Heart left ventricle (tissue), 16 donors: ENCODE measurements at regions of chr2 and their contacts with region 1.

Region 1: DNA sequence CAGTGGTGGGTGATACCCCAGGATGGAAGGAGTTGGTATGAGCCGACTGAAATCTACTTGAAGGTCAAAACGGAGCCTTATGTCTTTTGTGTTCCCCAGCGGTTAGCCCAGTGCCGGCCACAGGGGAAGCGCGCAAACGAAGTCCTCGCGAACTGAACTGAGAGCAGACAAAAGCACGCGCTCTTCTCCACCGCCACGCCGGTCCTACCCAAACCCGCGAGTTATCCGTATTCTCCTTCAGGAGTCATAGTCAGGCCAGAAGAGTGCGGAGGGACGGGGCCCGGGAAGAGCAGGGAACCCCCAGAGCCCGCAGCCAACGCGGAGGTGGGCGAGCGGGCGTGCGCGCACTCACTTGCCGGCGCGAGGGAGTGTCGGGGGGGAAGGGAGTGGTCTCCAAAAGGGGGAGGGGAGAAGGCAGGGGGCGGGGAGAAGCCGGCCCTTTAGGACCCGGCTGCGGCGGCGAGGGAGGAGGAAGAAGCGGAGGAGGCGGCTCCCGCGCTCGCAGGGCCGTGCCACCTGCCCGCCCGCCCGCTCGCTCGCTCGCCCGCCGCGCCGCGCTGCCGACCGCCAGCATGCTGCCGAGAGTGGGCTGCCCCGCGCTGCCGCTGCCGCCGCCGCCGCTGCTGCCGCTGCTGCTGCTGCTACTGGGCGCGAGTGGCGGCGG is at the start of gene IGFBP2:
- DNase-seq: peak; percentile 53 to 72 (median 62)
- ATAC-seq: peak in 3 of 4 donors; percentile 56 to 76 (median 65)
- H3K4me3 ChIP-seq: peak within 1 kb of the TSS; percentile 28 to 88 (median 66)
- H3K27ac ChIP-seq: peak within 1 kb of the TSS in 8 of 12 donors; percentile 22 to 66 (median 46)
- H3K4me1 ChIP-seq: peaks cover 0 to 52% (median 27%) of the 10 kb centered on the region in 12 donors
- H3K27me3 ChIP-seq: peaks cover 0 to 28% (median 0%) of the 10 kb centered on the region in 9 donors
- CTCF ChIP-seq: peak in 1 of 12 donors; percentile 7
- POLR2A ChIP-seq: no peak
- total RNA-seq, gene IGFBP2: 57.2 to 326 (median 113) TPM

Region 2: DNA sequence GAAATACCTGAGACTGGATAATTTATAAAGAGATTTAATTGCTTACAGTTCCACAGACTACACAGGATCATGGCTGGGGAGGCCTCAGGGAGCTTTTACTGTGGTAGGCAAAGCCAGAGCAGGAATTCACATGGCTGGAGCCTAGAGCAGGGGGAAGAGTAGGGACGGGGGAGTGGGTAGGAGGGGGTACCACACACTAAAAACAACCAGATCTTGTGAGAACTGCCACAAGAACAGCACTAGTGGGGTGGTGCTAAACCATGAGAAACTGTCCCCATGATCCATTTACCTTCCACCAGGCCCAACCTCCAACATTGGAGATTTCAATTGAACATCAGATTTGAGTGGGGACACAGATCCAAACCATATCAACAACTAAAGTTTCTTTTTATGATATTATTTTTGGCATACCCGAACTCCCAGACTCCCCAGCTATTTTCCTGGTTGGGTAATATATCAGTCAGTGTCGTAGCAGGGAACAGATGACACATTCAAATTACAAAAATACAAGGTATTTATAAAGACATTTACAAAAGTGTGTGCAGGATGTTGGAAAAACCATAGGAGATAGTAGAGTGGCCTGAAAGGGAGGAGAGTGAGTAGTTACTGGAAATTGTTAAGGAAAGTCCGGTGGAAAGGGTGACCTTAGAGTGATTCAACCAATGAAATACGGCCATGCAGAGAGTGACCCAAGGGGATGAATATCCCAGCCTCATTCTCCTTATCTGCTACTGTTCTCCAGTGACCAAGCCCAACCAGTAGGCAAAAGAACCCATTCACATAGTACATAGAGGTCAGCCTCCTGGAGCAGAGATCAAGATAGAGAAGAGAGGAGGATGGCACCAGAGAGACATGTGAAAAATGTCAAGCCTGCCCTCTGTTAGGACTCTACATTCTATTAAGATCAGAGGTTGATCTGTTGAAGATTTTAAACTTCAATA is 125.6 kb before region 1 on chr2:
- intact Hi-C with region 1: no loop called
- DNase-seq: no peak
- ATAC-seq: peak in 3 of 4 donors; percentile 13 to 34 (median 18)
- H3K4me3 ChIP-seq: no peak overlapping the region
- H3K27ac ChIP-seq: peak overlapping the region in 2 of 12 donors; percentile 25 to 36
- H3K4me1 ChIP-seq: peaks cover 0 to 17% (median 4%) of the 10 kb centered on the region in 12 donors
- H3K27me3 ChIP-seq: no peaks in the 10 kb centered on the region
- CTCF ChIP-seq: no peak
- POLR2A ChIP-seq: no peak

Region 3: DNA sequence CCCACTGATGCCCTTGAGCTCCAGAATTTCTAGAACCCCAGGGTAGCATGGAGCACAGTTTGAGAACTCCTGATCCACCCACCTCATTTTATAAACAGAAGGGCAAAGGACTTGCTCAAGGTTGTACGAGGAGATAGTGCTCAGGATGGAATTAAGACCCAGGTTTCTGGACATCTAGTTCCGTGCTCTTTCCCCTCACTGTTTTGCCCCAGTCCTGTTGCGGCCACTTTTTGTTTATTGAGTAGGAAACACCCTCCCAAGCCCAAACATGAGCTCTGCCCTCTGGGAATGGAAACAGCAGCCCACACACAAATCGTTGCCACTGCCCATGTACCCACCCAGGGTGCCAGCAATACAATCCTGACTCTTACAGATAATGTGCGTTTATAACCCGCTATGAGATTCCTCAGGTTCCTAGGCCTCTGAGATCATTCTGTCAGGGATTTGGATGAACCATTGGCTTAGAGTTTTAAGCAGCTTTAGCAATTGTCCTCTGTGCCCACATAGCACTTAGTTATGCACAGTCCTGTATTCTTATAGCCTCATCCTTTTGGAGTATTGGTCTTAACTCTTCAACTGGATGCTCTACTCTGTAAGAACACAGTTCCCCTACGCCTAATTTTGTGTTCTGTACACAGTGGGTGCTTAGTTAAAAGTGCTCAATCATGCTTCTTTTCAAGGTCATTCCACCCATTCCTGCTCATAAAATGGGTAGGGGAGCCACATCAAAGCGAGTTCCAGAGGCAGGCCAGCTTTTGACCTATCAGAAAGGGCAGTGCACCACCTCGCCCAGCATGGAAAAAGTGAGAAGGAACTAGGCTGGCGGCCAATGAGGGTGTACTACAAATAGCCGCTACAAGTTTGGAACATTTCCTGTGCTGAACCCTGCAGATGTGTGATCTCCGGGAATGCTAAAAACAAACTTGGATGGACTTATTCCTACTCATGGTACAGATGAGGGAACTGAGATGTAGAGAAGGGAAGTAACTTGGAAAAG is 60.2 kb before region 1 on chr2:
- intact Hi-C with region 1: loop called in 2 of 10 experiments (anchors 5 kb)
- DNase-seq: peak; percentile 83 to 94 (median 92)
- ATAC-seq: peak; percentile 92 to 98 (median 94)
- H3K4me3 ChIP-seq: no peak overlapping the region
- H3K27ac ChIP-seq: peak overlapping the region; percentile 35 to 92 (median 86)
- H3K4me1 ChIP-seq: peaks cover 8 to 47% (median 20%) of the 10 kb centered on the region in 12 donors
- H3K27me3 ChIP-seq: no peaks in the 10 kb centered on the region
- CTCF ChIP-seq: no peak
- POLR2A ChIP-seq: no peak

Region 4: GRCh38 chr2:216578325-216578724 is 54.8 kb before region 1 on chr2:
- intact Hi-C with region 1: loop called in 2 of 10 experiments (anchors 5 kb)
- DNase-seq: no peak
- ATAC-seq: no peak
- H3K4me3 ChIP-seq: no peak overlapping the region
- H3K27ac ChIP-seq: no peak overlapping the region
- H3K4me1 ChIP-seq: peaks cover 0 to 20% (median 10%) of the 10 kb centered on the region in 12 donors
- H3K27me3 ChIP-seq: no peaks in the 10 kb centered on the region
- CTCF ChIP-seq: no peak
- POLR2A ChIP-seq: no peak

Region 5: DNA sequence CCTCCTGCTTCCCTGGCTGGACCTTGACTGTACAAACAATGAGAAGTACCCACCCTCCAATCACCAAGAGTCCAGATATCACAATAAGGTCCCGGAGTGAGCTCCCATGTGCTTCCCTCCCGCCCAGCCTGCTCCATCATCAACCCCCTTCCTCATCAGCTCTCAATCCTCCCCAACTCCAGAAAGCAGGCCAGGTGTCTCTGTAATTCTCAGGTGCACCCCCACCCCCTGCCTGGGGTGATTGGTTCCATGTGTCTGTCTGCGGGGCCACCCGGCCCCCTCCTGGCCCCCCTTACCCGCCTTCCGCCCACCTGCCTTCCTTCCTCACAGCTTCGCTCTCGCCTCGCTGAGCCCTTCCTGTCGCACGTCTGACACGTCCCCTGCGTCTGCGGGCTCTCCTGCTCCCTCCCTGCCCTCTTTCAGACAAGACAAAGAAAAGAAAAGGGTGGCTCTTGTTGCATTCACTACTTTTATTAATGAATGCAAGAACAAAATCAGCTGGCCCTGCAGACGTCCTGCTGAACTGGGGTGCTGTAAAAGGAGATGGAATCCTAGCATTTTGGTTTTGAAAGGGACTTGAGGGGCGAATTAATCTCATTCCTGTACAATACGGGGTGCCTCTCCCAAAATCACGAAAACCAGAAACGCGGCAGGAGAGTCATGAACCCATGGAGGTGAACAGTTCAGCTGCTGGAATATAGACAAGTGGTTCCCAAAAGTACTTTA is 26.4 kb before region 1 on chr2:
- intact Hi-C with region 1: no loop called
- DNase-seq: no peak
- ATAC-seq: peak in 2 of 4 donors; percentile 12 to 62
- H3K4me3 ChIP-seq: no peak overlapping the region
- H3K27ac ChIP-seq: no peak overlapping the region
- H3K4me1 ChIP-seq: peaks cover 0 to 6% (median 0%) of the 10 kb centered on the region in 12 donors
- H3K27me3 ChIP-seq: peaks cover 0 to 2% (median 0%) of the 10 kb centered on the region in 9 donors
- CTCF ChIP-seq: no peak
- POLR2A ChIP-seq: no peak

Region 6: GRCh38 chr2:216710551-216711301 is 77.6 kb after region 1 on chr2:
- intact Hi-C with region 1: no loop called
- DNase-seq: peak in 3 of 5 donors; percentile 53 to 75 (median 71)
- ATAC-seq: peak; percentile 53 to 76 (median 72)
- H3K4me3 ChIP-seq: no peak overlapping the region
- H3K27ac ChIP-seq: peak overlapping the region in 11 of 12 donors; percentile 44 to 83 (median 53)
- H3K4me1 ChIP-seq: peaks cover 0 to 42% (median 4%) of the 10 kb centered on the region in 12 donors
- H3K27me3 ChIP-seq: no peaks in the 10 kb centered on the region
- CTCF ChIP-seq: no peak
- POLR2A ChIP-seq: no peak